ENCODE measurements at regions of chr11 and their contacts with region 1.

Region 1: GRCh38 chr11:67583247-67584204 is at the start of gene GSTP1:
- DNase-seq: no peak
- ATAC-seq: peak; percentile 82
- H3K4me3 ChIP-seq: peak within 1 kb of the TSS; percentile 85
- H3K27ac ChIP-seq: peak within 1 kb of the TSS; percentile 89
- H3K4me1 ChIP-seq: peaks cover 54% of the 10 kb centered on the region
- H3K27me3 ChIP-seq: no peaks in the 10 kb centered on the region; a peak in 1 of 4 replicates
- CTCF ChIP-seq: peak; percentile 54 to 71 (median 60); a peak in 5 of 6 replicates
- EP300 ChIP-seq: no peak
- POLR2A ChIP-seq: peak; percentile 96
- RAD21 ChIP-seq: peak; percentile 23; the same call in 1 of the 2 replicates
- polyA plus RNA-seq, gene GSTP1: 469 to 685 TPM

Region 2: DNA sequence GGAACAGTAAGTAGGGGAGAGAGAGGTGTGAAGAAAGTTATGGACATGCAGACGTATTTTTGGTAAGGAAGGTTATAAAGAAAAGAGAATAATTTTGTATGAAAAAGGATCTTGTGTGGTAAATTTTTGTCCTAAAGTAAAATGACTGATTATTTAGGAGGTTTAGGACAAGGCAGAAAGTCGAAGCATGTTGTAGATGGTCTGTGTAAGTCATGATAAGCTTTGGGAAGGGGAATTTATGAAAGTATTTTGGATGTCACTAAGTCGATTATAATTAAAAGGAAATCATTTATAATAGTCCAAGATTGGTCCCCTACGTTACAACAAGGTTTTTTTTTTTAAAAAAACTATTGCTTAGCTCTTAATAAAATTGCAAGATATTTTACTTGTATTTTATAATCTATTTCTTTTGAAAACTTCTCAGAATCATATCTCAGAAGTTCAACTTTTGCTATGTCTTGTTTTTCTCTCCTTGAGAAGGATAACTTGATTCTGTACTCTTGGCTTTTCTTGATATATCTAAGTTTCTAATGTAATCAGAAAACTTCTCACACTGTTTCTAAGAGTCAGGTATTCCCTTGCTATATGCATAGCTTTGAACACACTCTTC is 49.4 kb before region 1 on chr11:
- CTCF ChIA-PET with region 1: no interaction called
- POLR2A ChIA-PET with region 1: no interaction called
- RAD21 ChIA-PET with region 1: no interaction called
- SMC1A ChIA-PET with region 1: no interaction called
- in situ Hi-C with region 1: no loop called
- intact Hi-C with region 1: no loop called
- DNase-seq: no peak
- ATAC-seq: no peak
- H3K4me3 ChIP-seq: no peak overlapping the region
- H3K27ac ChIP-seq: no peak overlapping the region
- H3K4me1 ChIP-seq: no peaks in the 10 kb centered on the region; the same call in 1 of the 2 replicates
- H3K27me3 ChIP-seq: no peaks in the 10 kb centered on the region; a peak in 2 of 4 replicates
- CTCF ChIP-seq: no peak
- EP300 ChIP-seq: no peak
- POLR2A ChIP-seq: no peak
- RAD21 ChIP-seq: no peak

Region 3: GRCh38 chr11:67572747-67573419 is 10.6 kb before region 1 on chr11:
- CTCF ChIA-PET with region 1: interaction called, 16 read pairs
- POLR2A ChIA-PET with region 1: no interaction called
- RAD21 ChIA-PET with region 1: no interaction called
- SMC1A ChIA-PET with region 1: interaction called, 8 read pairs
- in situ Hi-C with region 1: no loop called
- intact Hi-C with region 1: no loop called
- DNase-seq: no peak
- ATAC-seq: peak; percentile 77
- H3K4me3 ChIP-seq: no peak overlapping the region
- H3K27ac ChIP-seq: no peak overlapping the region
- H3K4me1 ChIP-seq: peaks cover 5% of the 10 kb centered on the region
- H3K27me3 ChIP-seq: no peaks in the 10 kb centered on the region; a peak in 1 of 4 replicates
- CTCF ChIP-seq: peak; percentile 56 to 85 (median 62)
- EP300 ChIP-seq: no peak
- POLR2A ChIP-seq: no peak
- RAD21 ChIP-seq: peak; percentile 73

Region 4: DNA sequence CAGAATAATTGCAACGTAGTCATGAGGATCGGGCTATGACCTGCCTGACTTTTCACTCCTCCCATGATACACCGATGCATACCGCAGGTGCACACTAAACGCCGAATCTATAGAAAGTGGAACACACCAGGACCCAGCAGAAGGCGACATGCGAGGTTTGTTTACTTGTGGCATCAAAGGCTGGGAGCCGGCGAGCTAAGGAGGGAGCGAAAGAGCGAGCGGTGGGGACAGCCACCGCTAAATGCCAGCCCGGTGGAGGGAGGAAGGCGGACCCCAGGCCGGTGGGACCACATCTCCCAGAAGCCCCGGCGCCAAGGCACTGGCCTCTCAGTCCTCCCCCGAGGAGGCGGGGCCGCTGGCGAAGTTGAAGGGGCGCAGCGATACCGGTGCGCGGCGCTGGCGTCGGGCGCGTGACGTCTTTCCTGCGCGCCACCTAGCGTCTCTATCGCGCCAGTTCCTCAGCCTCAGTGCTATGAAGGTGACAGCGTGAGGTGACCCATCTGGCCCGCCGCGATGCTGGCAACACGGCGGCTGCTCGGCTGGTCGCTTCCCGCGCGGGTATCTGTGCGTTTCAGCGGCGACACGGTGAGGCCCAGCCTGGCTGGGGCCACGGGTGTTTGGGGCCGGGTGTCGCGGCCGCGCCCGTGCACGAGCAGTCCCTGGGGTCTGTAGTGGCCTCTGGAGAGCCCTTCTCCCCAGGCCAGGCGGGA is 23.1 kb after region 1 on chr11 and contains the start of gene NDUFV1:
- CTCF ChIA-PET with region 1: interaction called, 7 read pairs
- POLR2A ChIA-PET with region 1: interaction called, 4 read pairs
- RAD21 ChIA-PET with region 1: interaction called, 4 read pairs
- SMC1A ChIA-PET with region 1: interaction called, 4 read pairs
- in situ Hi-C with region 1: no loop called
- intact Hi-C with region 1: loop called (anchors 2 kb)
- DNase-seq: peak; percentile 76
- ATAC-seq: peak; percentile 100
- H3K4me3 ChIP-seq: peak within 1 kb of the TSS; percentile 84
- H3K27ac ChIP-seq: peak within 1 kb of the TSS; percentile 68
- H3K4me1 ChIP-seq: peaks cover 12% of the 10 kb centered on the region
- H3K27me3 ChIP-seq: no peaks in the 10 kb centered on the region
- CTCF ChIP-seq: peak; percentile 47 to 79 (median 73)
- EP300 ChIP-seq: peak in 1 of 2 experiments; percentile 41; a peak in 1 of 4 replicates
- POLR2A ChIP-seq: peak; percentile 97
- RAD21 ChIP-seq: 0 out of 2 replicates have a peak, but pooled peaks have one; percentile 26
- polyA plus RNA-seq, gene NDUFV1: 8.2 to 51.7 TPM

Region 5: DNA sequence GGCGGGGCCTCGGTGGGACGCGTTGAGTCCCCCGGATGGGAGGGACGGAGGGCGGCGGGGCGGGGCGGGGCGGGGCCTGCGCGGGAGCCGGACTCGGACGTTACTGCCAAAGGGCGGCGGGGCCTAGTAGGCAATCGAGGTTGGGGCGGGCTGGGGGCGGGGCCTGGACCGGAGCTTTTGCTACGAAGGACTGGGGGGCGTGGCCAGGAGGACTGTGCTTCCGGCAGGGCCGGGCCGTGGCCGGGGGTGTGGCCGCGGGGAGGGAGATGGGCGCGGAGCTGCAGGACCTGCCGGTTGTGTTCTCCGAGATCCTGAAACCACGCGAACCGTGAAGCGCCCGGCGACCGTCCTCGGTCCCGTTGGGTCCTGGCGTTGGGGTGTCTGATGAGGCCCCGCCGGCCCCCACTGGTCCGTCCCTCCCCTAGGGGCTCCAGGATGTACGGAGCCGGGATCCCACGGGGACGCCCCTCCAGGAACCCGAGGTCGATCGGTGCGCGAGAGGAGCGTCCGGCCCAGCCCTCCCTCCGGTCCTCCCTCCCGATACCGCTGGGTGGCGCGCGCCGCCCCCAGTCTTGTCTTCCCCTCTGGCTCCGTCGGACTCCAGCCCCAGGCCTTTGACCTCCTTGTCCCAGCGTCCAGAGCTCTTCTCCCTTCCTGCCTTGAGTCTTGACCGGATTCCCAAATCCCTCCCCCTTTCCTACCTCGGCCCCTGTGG is 46.9 kb after region 1 on chr11:
- CTCF ChIA-PET with region 1: interaction called, 43 read pairs
- POLR2A ChIA-PET with region 1: interaction called, 6 read pairs
- RAD21 ChIA-PET with region 1: interaction called, 38 read pairs
- SMC1A ChIA-PET with region 1: interaction called, 14 read pairs
- in situ Hi-C with region 1: no loop called
- intact Hi-C with region 1: no loop called
- DNase-seq: peak; percentile 75
- ATAC-seq: peak; percentile 86
- H3K4me3 ChIP-seq: peak overlapping the region; percentile 71
- H3K27ac ChIP-seq: peak overlapping the region; percentile 46
- H3K4me1 ChIP-seq: peaks cover 15% of the 10 kb centered on the region
- H3K27me3 ChIP-seq: no peaks in the 10 kb centered on the region
- CTCF ChIP-seq: peak; percentile 54 to 72 (median 67)
- EP300 ChIP-seq: no peak
- POLR2A ChIP-seq: peak; percentile 82
- RAD21 ChIP-seq: peak; percentile 56

Region 6: GRCh38 chr11:67656278-67656922 is 72.9 kb after region 1 on chr11:
- CTCF ChIA-PET with region 1: interaction called, 21 read pairs
- POLR2A ChIA-PET with region 1: interaction called, 3 read pairs
- RAD21 ChIA-PET with region 1: interaction called, 12 read pairs
- SMC1A ChIA-PET with region 1: interaction called, 21 read pairs
- in situ Hi-C with region 1: no loop called
- intact Hi-C with region 1: no loop called
- DNase-seq: peak; percentile 49
- ATAC-seq: peak; percentile 36; the same call in 2 of the 3 replicates
- H3K4me3 ChIP-seq: peak overlapping the region; percentile 14; the same call in 1 of the 2 replicates
- H3K27ac ChIP-seq: peak overlapping the region; percentile 71
- H3K4me1 ChIP-seq: peaks cover 29% of the 10 kb centered on the region
- H3K27me3 ChIP-seq: no peaks in the 10 kb centered on the region
- CTCF ChIP-seq: no peak
- EP300 ChIP-seq: no peak
- POLR2A ChIP-seq: no peak
- RAD21 ChIP-seq: no peak

Region 7: GRCh38 chr11:68121067-68121899 is 537.8 kb after region 1 on chr11 and contains the start of gene CHKA:
- CTCF ChIA-PET with region 1: no interaction called
- POLR2A ChIA-PET with region 1: no interaction called
- RAD21 ChIA-PET with region 1: no interaction called
- SMC1A ChIA-PET with region 1: no interaction called
- in situ Hi-C with region 1: no loop called
- intact Hi-C with region 1: no loop called
- DNase-seq: peak; percentile 47
- ATAC-seq: peak; percentile 89
- H3K4me3 ChIP-seq: peak within 1 kb of the TSS; percentile 92
- H3K27ac ChIP-seq: peak within 1 kb of the TSS; percentile 89
- H3K4me1 ChIP-seq: peaks cover 12% of the 10 kb centered on the region
- H3K27me3 ChIP-seq: no peaks in the 10 kb centered on the region
- CTCF ChIP-seq: no peak
- EP300 ChIP-seq: no peak
- POLR2A ChIP-seq: peak; percentile 76
- RAD21 ChIP-seq: no peak
- polyA plus RNA-seq, gene CHKA: 5.2 to 5.3 TPM

Measured in GM12878 (cell line).